GM12878 (cell line): ENCODE measurements at regions of chr6 and their contacts with region 1.

Region 1: DNA sequence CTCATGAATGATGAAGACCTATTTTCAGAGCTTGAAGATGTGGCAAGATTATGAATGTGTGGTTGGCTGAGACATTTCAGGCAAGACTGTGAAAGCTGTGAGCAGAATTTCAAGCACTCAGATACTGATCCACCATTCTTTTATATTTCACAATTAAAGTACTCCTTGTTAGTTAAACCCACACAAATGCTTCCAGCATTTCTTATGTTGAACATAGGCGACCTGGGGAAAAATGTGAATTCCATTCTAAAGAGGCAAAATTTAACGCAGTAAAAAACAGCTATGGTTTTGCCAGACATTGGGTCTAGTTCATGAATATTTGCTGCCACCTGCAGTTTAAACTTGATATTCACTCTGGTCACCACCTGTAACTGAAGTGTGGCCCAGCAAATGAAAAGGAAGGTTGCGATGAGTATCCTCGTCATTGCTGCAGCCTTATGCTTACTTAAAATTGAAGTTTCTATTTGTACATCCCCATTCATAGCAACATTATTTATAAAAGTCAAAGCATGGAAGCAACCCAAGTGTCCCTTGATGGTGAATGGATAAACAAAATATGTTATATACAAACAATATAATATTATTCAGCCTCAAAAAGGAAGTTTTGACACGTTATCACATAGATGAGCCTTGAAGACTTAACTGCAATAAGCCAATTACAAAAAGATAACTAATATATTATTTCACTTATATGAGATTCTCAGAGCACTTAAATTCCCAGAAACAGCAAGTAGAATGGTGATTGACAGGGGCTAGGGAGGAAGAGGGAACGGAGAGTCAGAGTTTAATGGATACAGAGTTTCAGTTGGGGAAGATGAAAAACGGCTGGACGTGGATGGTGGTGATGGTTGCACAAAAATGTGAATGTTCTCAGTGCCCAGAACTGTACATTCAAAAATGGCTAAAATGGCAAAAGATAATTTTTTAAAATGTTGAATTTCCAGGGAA is 32.4 kb upstream of the FAM184A start:
- DNase-seq: peak; percentile 28
- ATAC-seq: peak; percentile 93
- H3K4me3 ChIP-seq: no peak overlapping the region
- H3K27ac ChIP-seq: no peak overlapping the region
- H3K4me1 ChIP-seq: no peaks in the 10 kb centered on the region
- H3K27me3 ChIP-seq: no peaks in the 10 kb centered on the region
- CTCF ChIP-seq: peak; percentile 42 to 72 (median 53); a peak in 5 of 6 replicates
- EP300 ChIP-seq: no peak
- POLR2A ChIP-seq: no peak
- RAD21 ChIP-seq: peak; percentile 81

Region 2: DNA sequence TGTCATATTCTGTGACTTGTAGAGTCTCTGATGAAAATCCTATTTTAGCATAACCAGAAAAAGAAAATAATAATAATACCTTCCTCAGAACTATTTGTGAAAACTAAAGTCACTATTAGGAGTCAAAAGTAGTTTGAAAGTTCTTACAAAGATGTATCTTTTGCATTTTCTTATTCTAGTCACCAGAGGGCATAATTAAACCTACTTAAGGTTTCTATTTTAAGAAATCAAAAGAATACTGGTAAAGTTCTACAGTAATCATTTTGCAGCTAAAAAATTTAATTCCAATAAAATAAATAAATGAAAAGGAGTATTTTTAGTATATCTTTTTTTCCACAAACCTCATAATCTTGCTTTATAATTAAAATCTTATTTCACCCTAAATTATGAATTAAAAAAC is 147.9 kb before region 1 on chr6:
- CTCF ChIA-PET with region 1: interaction called, 35 read pairs
- POLR2A ChIA-PET with region 1: no interaction called
- RAD21 ChIA-PET with region 1: interaction called, 5 read pairs
- SMC1A ChIA-PET with region 1: interaction called, 12 read pairs
- in situ Hi-C with region 1: loop called (anchors 25 kb)
- intact Hi-C with region 1: loop called (anchors 1 kb)
- DNase-seq: no peak
- ATAC-seq: no peak
- H3K4me3 ChIP-seq: no peak overlapping the region
- H3K27ac ChIP-seq: no peak overlapping the region
- H3K4me1 ChIP-seq: no peaks in the 10 kb centered on the region
- H3K27me3 ChIP-seq: no peaks in the 10 kb centered on the region
- CTCF ChIP-seq: peak in 1 of 3 experiments; percentile 9; a peak in 1 of 6 replicates
- EP300 ChIP-seq: no peak
- POLR2A ChIP-seq: no peak
- RAD21 ChIP-seq: no peak

Region 3: GRCh38 chr6:118968416-118968815 is 142.5 kb before region 1 on chr6:
- CTCF ChIA-PET with region 1: interaction called, 35 read pairs
- POLR2A ChIA-PET with region 1: no interaction called
- RAD21 ChIA-PET with region 1: interaction called, 7 read pairs
- SMC1A ChIA-PET with region 1: interaction called, 12 read pairs
- in situ Hi-C with region 1: loop called (anchors 25 kb)
- intact Hi-C with region 1: loop called (anchors 1 kb)
- DNase-seq: no peak
- ATAC-seq: no peak
- H3K4me3 ChIP-seq: no peak overlapping the region
- H3K27ac ChIP-seq: no peak overlapping the region
- H3K4me1 ChIP-seq: no peaks in the 10 kb centered on the region
- H3K27me3 ChIP-seq: no peaks in the 10 kb centered on the region
- CTCF ChIP-seq: 0 out of 6 replicates have a peak, but pooled peaks of 2 of the 3 experiments have one; percentile 3 to 13
- EP300 ChIP-seq: no peak
- POLR2A ChIP-seq: no peak
- RAD21 ChIP-seq: peak; percentile 29; the same call in 1 of the 2 replicates

Region 4: DNA sequence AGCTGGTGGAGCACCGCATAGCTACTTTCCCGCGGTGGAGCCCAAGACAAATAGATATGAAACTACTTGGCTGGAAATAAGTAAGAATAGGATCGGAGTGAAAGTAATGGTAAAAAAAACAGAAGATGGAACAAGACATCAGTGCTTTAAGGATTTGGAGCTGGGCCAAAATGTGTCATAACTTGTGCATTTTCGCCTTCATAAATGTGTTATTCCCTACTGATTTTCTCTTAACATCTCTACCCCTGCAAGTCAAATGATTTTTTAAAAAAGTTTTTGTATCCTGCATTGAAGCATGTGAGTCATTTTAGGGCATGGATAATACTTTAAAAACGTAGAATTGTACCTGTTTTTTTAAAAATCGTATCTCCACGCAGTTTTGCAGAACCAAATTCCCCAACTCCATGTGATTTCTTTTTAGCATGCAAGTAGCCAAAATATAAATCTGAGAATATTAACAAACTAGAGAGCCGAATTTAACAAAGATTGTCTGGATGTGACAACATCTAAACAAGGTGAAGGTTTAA is 31.5 kb before region 1 on chr6:
- CTCF ChIA-PET with region 1: no interaction called
- POLR2A ChIA-PET with region 1: no interaction called
- RAD21 ChIA-PET with region 1: no interaction called
- SMC1A ChIA-PET with region 1: no interaction called
- in situ Hi-C with region 1: no loop called
- intact Hi-C with region 1: no loop called
- DNase-seq: no peak
- ATAC-seq: no peak
- H3K4me3 ChIP-seq: peak overlapping the region; percentile 56; the same call in 1 of the 2 replicates
- H3K27ac ChIP-seq: no peak overlapping the region
- H3K4me1 ChIP-seq: peaks cover 3% of the 10 kb centered on the region; the same call in 1 of the 2 replicates
- H3K27me3 ChIP-seq: peaks cover 3 to 27% of the 10 kb centered on the region in 2 experiments
- CTCF ChIP-seq: no peak
- EP300 ChIP-seq: no peak
- POLR2A ChIP-seq: no peak
- RAD21 ChIP-seq: no peak